PC-3 (cell line): ENCODE measurements at regions of chr17 and their contacts with region 1.

Region 1: GRCh38 chr17:45148183-45149036 is at the start of gene HEXIM1:
- DNase-seq: peak; percentile 100
- ATAC-seq: peak; percentile 72
- H3K4me3 ChIP-seq: peak within 1 kb of the TSS; percentile 91
- H3K27ac ChIP-seq: peak within 1 kb of the TSS; percentile 90
- H3K4me1 ChIP-seq: peaks cover 27% of the 10 kb centered on the region
- H3K27me3 ChIP-seq: no peaks in the 10 kb centered on the region
- CTCF ChIP-seq: no peak
- total RNA-seq, gene HEXIM1: 47.3 and 59.0 TPM in 2 replicates

Region 2: DNA sequence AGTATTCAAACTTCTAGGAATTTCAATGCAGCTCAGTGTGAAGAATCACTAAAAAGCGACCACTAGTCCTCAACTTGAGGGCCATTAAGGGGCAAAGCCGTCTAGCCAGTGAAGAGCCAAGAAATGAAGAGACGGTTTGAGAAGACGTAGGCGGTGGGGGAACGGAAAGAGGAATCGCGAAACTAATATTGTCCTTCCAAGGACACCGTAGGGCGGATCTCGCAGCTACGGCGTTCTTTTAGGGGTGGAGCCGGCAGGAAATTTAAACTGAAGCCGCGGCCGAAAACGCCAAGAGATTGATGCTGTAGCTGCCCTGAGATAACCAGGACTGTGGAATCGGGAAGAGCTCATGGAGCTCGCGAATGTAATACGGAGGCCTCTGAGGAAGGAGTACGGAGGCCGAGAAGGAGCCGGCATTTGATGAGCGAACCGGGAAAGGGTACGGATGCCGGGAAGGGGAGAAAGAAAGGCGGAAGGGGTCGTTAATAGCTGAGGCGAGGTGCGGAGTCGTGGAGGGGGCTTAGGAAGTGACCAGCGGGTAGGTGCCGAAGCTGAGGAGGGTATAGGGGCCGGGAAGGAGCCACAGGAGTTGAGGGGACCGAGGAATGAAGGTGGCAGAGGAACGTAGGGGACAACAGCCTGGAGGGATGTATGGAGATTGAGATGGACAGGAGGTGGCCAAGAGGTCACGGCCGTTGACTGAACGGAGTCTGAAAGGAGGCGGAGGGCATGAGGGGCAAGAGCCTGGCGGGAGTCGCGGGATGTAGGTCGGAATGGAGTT is 439.8 kb before region 1 on chr17 and contains the start of gene DBF4B:
- CTCF ChIA-PET with region 1: no interaction called
- POLR2A ChIA-PET with region 1: interaction called, 11 read pairs
- intact Hi-C with region 1: no loop called
- DNase-seq: peak; percentile 95
- ATAC-seq: peak; percentile 84
- H3K4me3 ChIP-seq: peak within 1 kb of the TSS; percentile 82
- H3K27ac ChIP-seq: peak within 1 kb of the TSS; percentile 68
- H3K4me1 ChIP-seq: peaks cover 14% of the 10 kb centered on the region
- H3K27me3 ChIP-seq: no peaks in the 10 kb centered on the region
- CTCF ChIP-seq: no peak
- total RNA-seq, gene DBF4B: 17.9 and 28.6 TPM in 2 replicates

Region 3: DNA sequence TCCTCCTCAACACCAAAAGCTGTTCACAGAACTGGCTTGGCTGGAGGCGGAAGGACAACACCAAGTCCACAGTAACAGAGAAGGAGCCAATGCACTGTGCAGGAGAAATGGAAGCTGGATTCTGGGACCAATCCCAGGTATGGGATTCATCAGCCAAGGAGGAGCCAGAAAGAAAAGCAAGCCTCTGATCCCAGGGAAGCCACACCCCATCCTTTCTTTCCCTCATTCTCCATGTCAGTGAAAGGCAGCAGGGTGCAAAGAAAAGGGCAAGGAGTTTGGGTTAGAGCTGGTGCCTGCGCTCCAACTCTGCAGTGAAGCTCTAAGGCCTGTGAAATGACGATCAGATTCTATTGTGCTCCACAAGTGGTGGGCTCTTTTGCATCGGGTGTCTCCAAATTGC is 108.0 kb before region 1 on chr17:
- CTCF ChIA-PET with region 1: no interaction called
- POLR2A ChIA-PET with region 1: no interaction called
- intact Hi-C with region 1: no loop called
- DNase-seq: no peak
- ATAC-seq: peak; percentile 63; the same call in 1 of the 2 replicates
- H3K4me3 ChIP-seq: no peak overlapping the region
- H3K27ac ChIP-seq: no peak overlapping the region
- H3K4me1 ChIP-seq: no peaks in the 10 kb centered on the region
- H3K27me3 ChIP-seq: no peaks in the 10 kb centered on the region
- CTCF ChIP-seq: no peak

Region 4: DNA sequence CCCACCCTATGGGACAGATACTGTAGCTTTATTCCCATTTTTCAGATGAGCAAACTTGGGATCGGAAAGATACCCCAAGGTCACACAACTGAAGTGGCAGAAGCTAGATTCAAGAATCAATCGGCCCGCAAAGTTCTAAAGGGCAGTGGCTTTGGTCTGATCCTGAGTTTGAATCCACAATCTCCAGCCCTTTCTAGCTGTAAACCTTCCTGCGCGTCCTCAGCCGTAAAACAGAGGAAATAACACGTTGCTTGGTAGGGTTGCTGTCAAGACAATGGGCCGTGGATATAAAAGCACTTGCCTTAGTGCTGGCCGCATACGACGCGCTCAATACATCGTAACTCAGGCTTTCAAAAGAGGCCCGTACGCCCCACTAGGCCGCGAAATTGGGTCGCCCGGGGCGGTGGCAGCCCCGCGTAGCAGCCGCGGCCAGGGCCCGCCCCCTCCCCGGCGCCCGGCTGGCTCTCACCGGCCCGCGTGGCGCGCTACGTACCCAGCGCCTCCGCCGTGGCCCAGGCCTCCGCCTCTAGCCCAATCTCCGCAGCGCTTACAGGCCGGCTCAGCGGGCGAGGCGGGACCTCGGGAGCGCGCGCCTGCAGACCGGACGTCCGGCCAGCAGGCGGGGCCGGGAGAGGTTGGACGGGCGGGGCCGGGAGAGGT is 97.2 kb before region 1 on chr17 and contains the start of gene DCAKD:
- CTCF ChIA-PET with region 1: no interaction called
- POLR2A ChIA-PET with region 1: interaction called, 10 read pairs
- intact Hi-C with region 1: no loop called
- DNase-seq: peak; percentile 99
- ATAC-seq: peak; percentile 98
- H3K4me3 ChIP-seq: peak within 1 kb of the TSS; percentile 84
- H3K27ac ChIP-seq: peak within 1 kb of the TSS; percentile 92
- H3K4me1 ChIP-seq: peaks cover 36% of the 10 kb centered on the region
- H3K27me3 ChIP-seq: no peaks in the 10 kb centered on the region
- CTCF ChIP-seq: no peak
- total RNA-seq, gene DCAKD: 56.2 and 59.5 TPM in 2 replicates

Region 5: DNA sequence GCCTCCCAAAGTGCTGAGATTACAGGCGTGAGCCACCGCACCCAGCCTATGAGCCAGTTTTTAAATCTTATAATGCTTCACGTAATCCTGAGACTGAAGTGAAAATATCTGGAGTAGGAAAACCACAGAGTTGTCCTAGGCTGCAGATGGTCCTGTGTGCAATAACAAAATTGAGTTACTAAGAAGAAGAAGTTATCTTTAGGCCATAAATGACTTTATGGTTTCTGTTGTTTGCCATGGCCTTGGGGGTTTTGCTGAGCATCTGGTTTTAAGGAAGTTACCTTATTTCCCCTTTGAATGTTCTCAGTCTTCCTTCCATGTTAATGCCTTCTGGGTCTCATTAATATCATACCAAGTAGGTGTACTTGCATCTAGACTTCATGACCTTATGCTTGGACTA is 70.8 kb before region 1 on chr17:
- CTCF ChIA-PET with region 1: no interaction called
- POLR2A ChIA-PET with region 1: no interaction called
- intact Hi-C with region 1: no loop called
- DNase-seq: no peak
- ATAC-seq: no peak
- H3K4me3 ChIP-seq: no peak overlapping the region
- H3K27ac ChIP-seq: no peak overlapping the region
- H3K4me1 ChIP-seq: peaks cover 10% of the 10 kb centered on the region
- H3K27me3 ChIP-seq: no peaks in the 10 kb centered on the region
- CTCF ChIP-seq: no peak

Region 6: DNA sequence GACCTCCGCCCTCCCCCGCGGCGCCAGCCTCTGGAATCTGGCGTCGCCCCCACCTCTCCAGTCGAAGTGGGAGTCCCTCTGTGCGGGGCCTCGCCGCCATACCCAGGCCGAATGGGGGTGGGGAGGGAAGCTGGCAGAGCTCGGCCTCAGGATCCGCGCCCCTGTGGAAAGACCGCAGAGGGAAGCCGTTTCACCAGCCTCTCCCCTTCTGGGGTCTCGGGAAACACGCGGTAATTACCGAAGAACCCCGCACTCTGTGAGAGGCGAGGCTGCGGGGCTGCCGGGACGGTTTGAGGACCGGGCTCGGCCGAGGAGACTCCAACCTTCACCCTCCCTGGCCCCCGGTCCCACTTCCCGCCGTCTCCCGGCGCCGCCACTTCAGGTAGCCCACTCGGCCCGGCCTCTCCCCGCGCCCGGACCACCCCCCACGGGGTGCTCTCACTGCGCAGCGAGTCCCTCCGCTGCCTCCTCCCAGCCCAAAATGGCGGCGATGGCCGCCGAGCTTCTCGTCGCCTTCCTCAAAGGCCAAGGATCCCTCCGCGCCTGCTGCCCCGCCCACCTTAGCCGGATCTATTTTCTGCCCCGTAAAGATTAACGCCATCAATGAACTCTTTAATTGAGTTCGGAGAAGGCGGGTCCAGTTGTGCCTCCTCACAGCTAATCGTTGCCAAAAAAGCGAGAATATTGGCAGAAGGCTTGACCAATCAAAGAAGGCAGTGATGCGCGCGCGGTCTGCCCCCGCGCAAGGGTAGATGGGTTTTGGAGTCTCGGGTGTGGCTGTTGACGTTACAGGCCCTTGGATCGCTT is 12.8 kb after region 1 on chr17:
- CTCF ChIA-PET with region 1: interaction called, 19 read pairs
- POLR2A ChIA-PET with region 1: interaction called, 77 read pairs
- intact Hi-C with region 1: loop called (anchors 1 kb)
- DNase-seq: peak; percentile 100
- ATAC-seq: peak; percentile 87
- H3K4me3 ChIP-seq: peak overlapping the region; percentile 83
- H3K27ac ChIP-seq: peak overlapping the region; percentile 91
- H3K4me1 ChIP-seq: peaks cover 39% of the 10 kb centered on the region
- H3K27me3 ChIP-seq: no peaks in the 10 kb centered on the region
- CTCF ChIP-seq: no peak; the same call in 1 of the 2 replicates

Region 7: GRCh38 chr17:45197555-45198334 is 49.3 kb after region 1 on chr17:
- CTCF ChIA-PET with region 1: interaction called, 97 read pairs
- POLR2A ChIA-PET with region 1: interaction called, 22 read pairs
- intact Hi-C with region 1: loop called (anchors 1 kb)
- DNase-seq: peak; percentile 99
- ATAC-seq: peak; percentile 99
- H3K4me3 ChIP-seq: peak overlapping the region; percentile 8; the same call in 1 of the 2 replicates
- H3K27ac ChIP-seq: no peak overlapping the region
- H3K4me1 ChIP-seq: peaks cover 16% of the 10 kb centered on the region
- H3K27me3 ChIP-seq: no peaks in the 10 kb centered on the region
- CTCF ChIP-seq: peak; percentile 100

Region 8: DNA sequence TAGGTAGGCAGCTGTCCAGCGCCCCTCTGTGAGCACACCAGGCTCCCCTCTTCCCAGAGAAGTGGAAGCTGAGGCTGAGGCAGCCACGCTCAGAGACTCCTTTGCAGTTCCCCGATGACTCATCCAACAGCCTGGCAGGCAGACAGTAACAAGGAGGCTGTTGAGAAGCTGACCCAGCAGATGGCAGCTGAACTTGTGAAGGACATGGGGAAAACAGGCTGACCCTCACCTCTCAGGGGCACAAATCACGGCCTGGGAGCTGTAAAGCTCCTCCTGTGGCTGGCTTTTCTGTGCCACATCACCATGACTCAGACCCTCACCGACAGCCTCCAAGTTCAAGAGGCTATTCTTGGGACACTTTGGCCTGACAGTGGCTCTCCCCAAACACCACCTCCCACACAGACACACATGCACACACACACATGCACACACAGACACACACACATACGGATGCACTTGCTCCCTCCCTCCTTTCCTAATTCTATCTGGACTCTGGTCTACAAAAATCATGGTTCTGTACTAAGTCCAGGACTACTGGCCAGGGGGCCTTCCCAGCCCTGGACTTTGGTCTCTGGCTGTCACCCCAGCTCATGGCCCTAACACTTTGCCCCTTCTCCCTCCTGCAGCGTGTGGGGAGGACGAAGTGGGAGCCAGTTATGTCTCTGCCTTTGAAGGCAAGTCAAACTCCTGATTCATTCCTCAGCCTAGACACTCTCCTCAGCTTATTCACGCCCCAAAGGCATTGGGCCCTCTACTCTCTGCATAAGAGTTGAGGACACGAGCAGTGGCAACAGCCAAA is 145.2 kb after region 1 on chr17:
- CTCF ChIA-PET with region 1: no interaction called
- POLR2A ChIA-PET with region 1: no interaction called
- intact Hi-C with region 1: no loop called
- DNase-seq: peak; percentile 90
- ATAC-seq: peak; percentile 77
- H3K4me3 ChIP-seq: no peak overlapping the region
- H3K27ac ChIP-seq: peak overlapping the region; percentile 72
- H3K4me1 ChIP-seq: peaks cover 52% of the 10 kb centered on the region
- H3K27me3 ChIP-seq: no peaks in the 10 kb centered on the region
- CTCF ChIP-seq: peak; percentile 49

Region 9: DNA sequence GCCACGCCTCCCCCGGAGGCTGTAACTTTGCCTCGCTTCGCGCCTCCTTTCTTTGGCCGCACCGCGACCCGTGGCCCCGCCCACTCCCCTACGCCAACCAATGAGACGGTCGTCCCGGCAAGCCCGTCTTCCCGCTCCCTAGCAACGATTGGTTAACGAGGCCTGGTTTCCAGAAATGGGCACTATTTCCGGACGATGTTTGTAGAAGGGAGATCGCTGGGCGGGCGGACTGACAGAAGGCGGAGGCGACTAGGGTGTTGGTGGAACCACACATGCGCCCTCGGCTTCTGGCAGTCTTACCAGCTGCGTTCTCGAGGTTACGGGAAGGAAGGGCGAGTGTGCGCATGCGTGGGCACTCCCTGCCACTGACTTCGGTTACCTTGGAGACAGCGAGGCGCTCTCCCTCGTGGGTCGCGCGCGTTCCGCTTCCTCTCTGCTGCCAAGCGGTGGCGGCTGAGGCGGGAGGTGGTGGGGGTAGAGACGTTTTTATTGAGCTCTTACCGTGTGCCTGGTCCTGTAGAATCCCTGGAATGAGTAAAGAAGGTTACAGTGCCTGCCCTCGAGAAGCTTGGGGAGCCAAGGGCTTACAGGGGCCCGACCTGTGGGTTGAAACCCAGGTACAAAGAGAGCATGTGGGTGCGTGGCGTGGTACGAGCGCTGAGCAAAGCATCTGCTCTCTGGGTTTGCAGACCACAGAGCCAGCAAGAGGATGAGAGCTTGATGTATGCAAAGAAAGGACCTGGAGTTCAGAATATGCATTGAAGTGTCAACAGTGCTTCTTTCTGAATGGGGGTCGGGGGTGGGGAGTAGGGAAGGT is 168.9 kb after region 1 on chr17:
- CTCF ChIA-PET with region 1: no interaction called
- POLR2A ChIA-PET with region 1: interaction called, 16 read pairs
- intact Hi-C with region 1: no loop called
- DNase-seq: peak; percentile 100
- ATAC-seq: peak; percentile 49
- H3K4me3 ChIP-seq: peak overlapping the region; percentile 78
- H3K27ac ChIP-seq: peak overlapping the region; percentile 94
- H3K4me1 ChIP-seq: peaks cover 82% of the 10 kb centered on the region
- H3K27me3 ChIP-seq: no peaks in the 10 kb centered on the region
- CTCF ChIP-seq: 0 out of 2 replicates have a peak, but pooled peaks have one; percentile 19